Spleen (tissue), 13 donors: ENCODE measurements at regions of chr6 and their contacts with region 1.

Region 1: GRCh38 chr6:57221936-57222742 is at the start of gene RAB23:
- DNase-seq: peak; percentile 94
- H3K4me3 ChIP-seq: peak within 1 kb of the TSS; percentile 69 to 100 (median 99)
- H3K27ac ChIP-seq: peak within 1 kb of the TSS in 7 of 8 donors; percentile 18 to 85 (median 75)
- H3K4me1 ChIP-seq: peaks cover 0 to 25% (median 13%) of the 10 kb centered on the region in 6 donors
- H3K27me3 ChIP-seq: peaks cover 0 to 16% (median 0%) of the 10 kb centered on the region in 7 donors
- CTCF ChIP-seq: peak in 5 of 11 experiments; percentile 0 to 19 (median 8)
- POLR2A ChIP-seq: peak in 1 of 3 donors; percentile 56
- total RNA-seq, gene RAB23: 1.7 to 3.9 (median 2.2) TPM

Region 2: DNA sequence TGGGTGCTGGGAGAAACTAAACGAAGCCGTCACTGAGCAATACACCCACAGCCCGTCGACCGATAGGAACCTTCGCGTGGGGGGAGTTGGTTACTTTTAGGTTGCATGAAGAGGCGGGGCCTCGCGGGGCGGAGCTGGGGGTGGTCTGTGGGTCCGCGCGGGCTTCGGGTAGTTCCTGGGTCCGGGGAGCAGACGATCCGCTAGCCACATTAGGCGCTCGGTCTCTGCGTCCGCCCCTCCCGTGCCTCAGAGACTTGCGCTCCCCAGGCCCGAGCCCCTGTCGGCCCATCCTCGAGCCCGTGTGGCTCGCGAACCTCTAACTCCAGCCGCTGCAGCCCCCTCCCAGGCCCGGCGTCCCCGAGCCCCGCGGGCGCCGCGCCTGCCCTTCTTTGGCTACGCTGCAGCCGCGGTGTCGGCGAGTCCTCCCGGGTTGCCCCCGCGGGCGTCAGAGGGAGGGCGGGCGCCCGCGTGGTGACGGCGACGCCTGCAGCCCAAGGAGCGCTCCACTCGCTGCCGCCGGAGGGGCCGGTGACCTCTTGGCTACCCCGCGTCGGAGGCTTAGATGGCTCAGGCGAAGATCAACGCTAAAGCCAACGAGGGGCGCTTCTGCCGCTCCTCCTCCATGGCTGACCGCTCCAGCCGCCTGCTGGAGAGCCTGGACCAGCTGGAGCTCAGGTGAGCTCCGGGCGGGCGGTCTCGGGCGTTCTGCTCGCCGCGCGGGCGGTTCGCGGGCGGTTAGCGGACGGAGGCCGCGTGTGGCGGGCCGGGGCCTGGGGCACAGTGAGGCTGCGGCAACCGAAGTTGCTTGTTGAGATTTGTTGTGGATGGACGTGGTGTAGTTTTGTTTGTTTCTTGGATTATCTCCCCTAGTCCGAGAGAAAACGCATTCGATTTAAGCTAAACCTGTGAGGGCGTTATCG is 49.7 kb before region 1 on chr6 and contains the start of gene BAG2:
- intact Hi-C with region 1: loop called (anchors 10 kb)
- DNase-seq: peak; percentile 96
- H3K4me3 ChIP-seq: peak within 1 kb of the TSS; percentile 55 to 80 (median 64)
- H3K27ac ChIP-seq: peak within 1 kb of the TSS; percentile 64 to 93 (median 87)
- H3K4me1 ChIP-seq: peaks cover 4 to 30% (median 20%) of the 10 kb centered on the region in 6 donors
- H3K27me3 ChIP-seq: no peaks in the 10 kb centered on the region
- CTCF ChIP-seq: peak in 8 of 11 experiments; percentile 12 to 50 (median 35)
- POLR2A ChIP-seq: peak in 1 of 3 donors; percentile 41
- total RNA-seq, gene BAG2: 1.6 to 3.8 (median 2.0) TPM